HCT116 (cell line): ENCODE measurements at regions of chr7 and their contacts with region 1.

Region 1: DNA sequence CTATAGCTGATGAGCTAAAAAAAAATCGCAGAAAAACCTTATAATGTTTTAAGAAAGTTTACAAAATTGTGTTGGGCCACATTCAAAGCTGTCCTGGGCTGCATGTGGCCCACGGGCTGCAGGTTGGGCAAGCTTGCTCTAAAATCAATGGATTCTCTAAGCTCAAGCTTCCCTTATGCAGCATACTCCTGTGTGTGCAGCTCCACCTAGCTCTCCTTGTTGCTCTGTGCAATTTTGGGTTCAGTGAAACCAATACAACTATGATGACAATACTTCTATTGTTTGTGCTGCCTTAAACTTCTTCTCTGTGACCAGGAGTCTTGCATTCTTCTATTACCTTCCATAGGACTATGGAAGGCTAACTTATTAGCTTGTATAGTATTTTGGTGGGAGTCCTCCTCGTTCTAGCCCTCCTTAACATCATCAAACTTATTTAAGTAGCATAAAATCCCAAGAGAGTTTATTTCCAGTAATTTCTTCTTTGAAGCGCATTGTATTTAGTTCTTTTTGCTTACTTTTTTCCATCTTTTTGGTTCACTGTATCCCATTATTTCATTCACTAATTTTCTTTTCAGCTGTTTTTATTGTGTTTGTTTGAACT is 170.9 kb upstream of the SMIM30 start:
- DNase-seq: peak; percentile 51
- ATAC-seq: peak; percentile 98
- H3K4me3 ChIP-seq: no peak overlapping the region
- H3K27ac ChIP-seq: no peak overlapping the region
- H3K4me1 ChIP-seq: no peaks in the 10 kb centered on the region; a peak in 1 of 4 replicates
- H3K27me3 ChIP-seq: no peaks in the 10 kb centered on the region
- CTCF ChIP-seq: peak; percentile 53 to 66 (median 54); a peak in 5 of 6 replicates
- POLR2A ChIP-seq: no peak
- RAD21 ChIP-seq: peak; percentile 82

Region 2: GRCh38 chr7:113015032-113015645 is 274.1 kb before region 1 on chr7:
- CTCF ChIA-PET with region 1: interaction called, 12 read pairs
- POLR2A ChIA-PET with region 1: no interaction called
- RAD21 ChIA-PET with region 1: no interaction called
- intact Hi-C with region 1: loop called (anchors 1 kb)
- DNase-seq: peak; percentile 27
- ATAC-seq: peak; percentile 59; the same call in 1 of the 2 replicates
- H3K4me3 ChIP-seq: no peak overlapping the region
- H3K27ac ChIP-seq: no peak overlapping the region
- H3K4me1 ChIP-seq: no peaks in the 10 kb centered on the region
- H3K27me3 ChIP-seq: no peaks in the 10 kb centered on the region
- CTCF ChIP-seq: peak; percentile 33 to 68 (median 56); a peak in 5 of 6 replicates
- POLR2A ChIP-seq: no peak
- RAD21 ChIP-seq: peak; percentile 82

Region 3: DNA sequence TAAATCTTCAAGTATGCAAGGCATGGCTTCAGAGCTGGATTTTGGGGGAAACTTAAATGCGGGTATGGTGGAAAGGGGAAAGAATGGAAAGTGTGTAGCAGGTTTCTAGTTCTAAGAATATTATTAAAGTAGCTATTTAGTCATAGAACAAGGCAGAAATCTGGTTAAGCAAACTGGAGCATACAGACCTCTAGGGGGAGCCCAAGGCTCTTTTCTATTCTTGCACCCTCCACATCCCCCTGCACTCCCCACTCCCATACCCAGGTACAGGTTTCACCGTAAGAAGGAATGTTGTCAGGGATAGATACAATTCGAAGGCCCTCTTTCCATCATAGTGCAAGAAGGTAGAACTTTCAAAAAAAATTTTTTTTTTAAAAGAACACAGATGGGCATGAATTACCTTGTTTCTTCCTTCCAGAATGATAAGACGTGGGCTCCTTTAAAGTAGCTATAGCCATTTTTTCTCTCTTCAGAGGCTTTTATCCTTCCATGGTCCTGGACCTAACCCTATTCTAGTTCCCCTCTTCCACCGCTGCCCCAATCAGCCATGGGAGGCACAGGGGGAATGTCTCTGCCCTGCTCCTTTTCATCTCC is 129.4 kb before region 1 on chr7:
- CTCF ChIA-PET with region 1: interaction called, 18 read pairs
- POLR2A ChIA-PET with region 1: no interaction called
- RAD21 ChIA-PET with region 1: interaction called, 5 to 6 read pairs
- intact Hi-C with region 1: no loop called
- DNase-seq: peak; percentile 39
- ATAC-seq: peak; percentile 93
- H3K4me3 ChIP-seq: no peak overlapping the region
- H3K27ac ChIP-seq: no peak overlapping the region
- H3K4me1 ChIP-seq: no peaks in the 10 kb centered on the region
- H3K27me3 ChIP-seq: no peaks in the 10 kb centered on the region
- CTCF ChIP-seq: peak; percentile 60 to 78 (median 75); a peak in 5 of 6 replicates
- POLR2A ChIP-seq: no peak
- RAD21 ChIP-seq: peak; percentile 75